SK-N-SH (cell line): ENCODE measurements at regions of chr11 and their contacts with region 1.

Region 1: GRCh38 chr11:86456052-86456939 is 81.6 kb downstream of the CCDC81 start:
- DNase-seq: peak; percentile 75
- H3K4me3 ChIP-seq: no peak overlapping the region; a peak in 1 of 4 replicates
- H3K27ac ChIP-seq: no peak overlapping the region
- H3K4me1 ChIP-seq: peaks cover 2 to 21% of the 10 kb centered on the region in 2 experiments; a peak in 3 of 4 replicates
- H3K27me3 ChIP-seq: no peaks in the 10 kb centered on the region
- CTCF ChIP-seq: peak; percentile 94
- EP300 ChIP-seq: no peak
- RAD21 ChIP-seq: peak; percentile 94

Region 2: GRCh38 chr11:86719781-86720463 is 263.6 kb after region 1 on chr11:
- CTCF ChIA-PET with region 1: no interaction called
- POLR2A ChIA-PET with region 1: no interaction called
- DNase-seq: no peak
- H3K4me3 ChIP-seq: no peak overlapping the region
- H3K27ac ChIP-seq: peak overlapping the region; percentile 87 to 94
- H3K4me1 ChIP-seq: peaks cover 0 to 18% of the 10 kb centered on the region in 2 experiments; a peak in 2 of 4 replicates
- H3K27me3 ChIP-seq: no peaks in the 10 kb centered on the region
- CTCF ChIP-seq: no peak
- EP300 ChIP-seq: peak; percentile 57 to 98; a peak in 3 of 4 replicates
- RAD21 ChIP-seq: no peak

Region 3: GRCh38 chr11:86773513-86774252 is 317.4 kb after region 1 on chr11:
- CTCF ChIA-PET with region 1: no interaction called
- POLR2A ChIA-PET with region 1: no interaction called
- DNase-seq: no peak
- H3K4me3 ChIP-seq: no peak overlapping the region
- H3K27ac ChIP-seq: peak overlapping the region; percentile 40 to 44; a peak in 2 of 4 replicates
- H3K4me1 ChIP-seq: peaks cover 0 to 3% of the 10 kb centered on the region in 2 experiments; a peak in 3 of 4 replicates
- H3K27me3 ChIP-seq: no peaks in the 10 kb centered on the region
- CTCF ChIP-seq: no peak
- EP300 ChIP-seq: peak in 1 of 2 experiments; percentile 46; a peak in 1 of 4 replicates
- RAD21 ChIP-seq: no peak

Region 4: DNA sequence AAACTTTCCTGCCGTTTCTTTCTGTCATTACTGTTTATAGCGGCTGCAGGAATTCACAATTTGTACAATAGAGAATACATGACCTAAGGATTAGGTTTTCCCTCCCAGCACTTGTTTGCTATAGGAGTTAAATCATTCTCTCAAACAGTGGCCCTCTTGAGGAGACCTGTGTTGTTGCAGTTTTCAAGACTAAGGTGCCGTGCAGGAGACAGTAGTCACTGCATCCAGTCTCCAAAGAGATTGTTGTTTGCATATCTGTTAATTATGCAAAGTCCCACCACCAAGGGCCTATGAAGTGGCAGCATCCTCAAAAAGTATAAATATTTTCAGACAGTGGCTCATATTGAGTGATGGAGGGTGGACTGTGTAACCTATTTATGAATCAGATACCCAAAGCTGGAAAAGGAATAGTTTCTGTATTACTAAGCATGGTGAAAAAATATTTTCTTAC is 346.3 kb after region 1 on chr11:
- CTCF ChIA-PET with region 1: interaction called, 32 read pairs
- POLR2A ChIA-PET with region 1: no interaction called
- DNase-seq: peak; percentile 43
- H3K4me3 ChIP-seq: peak overlapping the region; percentile 73 to 84; a peak in 3 of 4 replicates
- H3K27ac ChIP-seq: peak overlapping the region; percentile 60 to 93; a peak in 3 of 4 replicates
- H3K4me1 ChIP-seq: peaks cover 6 to 30% of the 10 kb centered on the region in 2 experiments
- H3K27me3 ChIP-seq: no peaks in the 10 kb centered on the region
- CTCF ChIP-seq: peak; percentile 70
- EP300 ChIP-seq: no peak
- RAD21 ChIP-seq: peak; percentile 41; the same call in 1 of the 2 replicates

Region 5: GRCh38 chr11:86818466-86819192 is 362.3 kb after region 1 on chr11:
- CTCF ChIA-PET with region 1: interaction called, 42 read pairs
- POLR2A ChIA-PET with region 1: no interaction called
- DNase-seq: peak; percentile 51
- H3K4me3 ChIP-seq: peak overlapping the region in 1 of 2 experiments; percentile 1; a peak in 2 of 4 replicates
- H3K27ac ChIP-seq: peak overlapping the region; percentile 83 to 95; a peak in 3 of 4 replicates
- H3K4me1 ChIP-seq: peaks cover 0 to 49% of the 10 kb centered on the region in 2 experiments
- H3K27me3 ChIP-seq: no peaks in the 10 kb centered on the region
- CTCF ChIP-seq: peak; percentile 76
- EP300 ChIP-seq: no peak; a peak in 1 of 4 replicates
- RAD21 ChIP-seq: peak; percentile 95